ENCODE measurements at regions of chr2 and their contacts with region 1.

Region 1: DNA sequence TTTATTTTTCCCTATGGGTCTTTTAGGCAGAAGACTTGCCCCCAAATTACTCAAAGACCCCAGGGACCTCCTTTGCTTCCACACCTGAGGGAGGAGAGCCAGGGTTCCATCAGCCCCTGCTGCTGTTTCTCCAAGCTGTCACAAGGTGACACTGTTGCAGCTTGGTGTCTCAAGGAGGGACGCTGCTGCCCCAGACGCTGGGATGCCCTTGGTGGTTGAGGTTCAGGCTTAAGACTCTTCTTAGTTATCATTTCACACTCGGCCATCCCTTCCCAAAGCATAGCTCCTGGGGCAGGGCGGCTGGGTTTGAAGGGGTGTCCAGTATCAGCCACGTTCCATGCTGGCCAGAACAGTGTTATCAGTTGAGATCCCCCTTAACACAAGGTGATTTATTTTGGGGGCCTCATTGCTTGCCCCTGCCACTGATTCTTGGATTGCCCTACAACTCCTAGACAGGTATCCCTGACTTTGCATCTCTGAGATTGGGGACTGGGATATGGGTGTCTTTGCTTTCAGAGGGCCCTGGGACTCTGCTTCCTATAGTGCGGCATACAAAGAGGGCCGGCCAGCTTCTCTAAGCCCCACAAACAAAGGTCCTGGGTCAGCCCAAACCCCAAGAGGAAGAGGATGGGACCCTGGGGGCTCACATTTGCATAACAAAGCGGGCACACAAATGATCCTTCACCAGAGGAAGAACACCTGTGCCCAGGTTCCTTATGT is 22.7 kb downstream of the GPR55 start:
- DNase-seq: peak; percentile 81
- ATAC-seq: peak; percentile 43
- H3K4me3 Mint-ChIP-seq: no peak overlapping the region
- H3K27ac Mint-ChIP-seq: no peak overlapping the region
- H3K4me1 Mint-ChIP-seq: peaks cover 56% of the 10 kb centered on the region
- H3K27me3 Mint-ChIP-seq: peaks cover 12% of the 10 kb centered on the region

Region 2: DNA sequence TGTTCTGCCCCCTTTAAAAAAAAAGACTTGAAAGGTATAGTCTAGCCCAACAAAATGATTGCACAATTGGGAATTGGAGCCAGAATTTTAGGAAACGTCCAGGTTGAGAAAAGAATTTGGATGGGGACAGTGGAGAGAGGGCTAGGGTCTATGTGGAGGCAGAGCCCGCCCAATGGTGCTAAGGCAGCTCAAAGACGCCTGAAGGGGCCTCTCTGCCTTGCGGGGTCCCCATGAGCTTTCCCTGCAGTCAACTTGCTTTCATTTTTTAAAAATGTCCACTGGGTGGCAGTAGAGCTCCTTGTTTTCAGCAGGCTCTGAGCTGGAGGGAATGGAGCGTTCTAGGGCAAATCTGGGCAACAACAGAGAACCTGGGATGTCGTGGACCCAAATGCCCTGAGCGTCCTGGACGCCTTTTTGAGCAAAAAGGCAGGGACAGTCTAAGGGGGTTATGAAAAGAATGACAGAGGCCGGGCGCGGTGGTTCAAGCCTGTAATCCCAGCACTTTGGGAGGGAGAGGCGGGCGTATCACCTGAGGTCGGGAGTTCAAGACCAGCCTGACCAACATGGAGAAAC is 77.8 kb before region 1 on chr2:
- CTCF ChIA-PET with region 1: interaction called, 12 read pairs
- POLR2A ChIA-PET with region 1: no interaction called
- intact Hi-C with region 1: loop called (anchors 2 to 5 kb)
- DNase-seq: peak; percentile 62
- ATAC-seq: peak; percentile 87
- H3K4me3 Mint-ChIP-seq: peak overlapping the region; percentile 44
- H3K27ac Mint-ChIP-seq: no peak overlapping the region
- H3K4me1 Mint-ChIP-seq: peaks cover 5% of the 10 kb centered on the region
- H3K27me3 Mint-ChIP-seq: peaks cover 28% of the 10 kb centered on the region

Region 3: DNA sequence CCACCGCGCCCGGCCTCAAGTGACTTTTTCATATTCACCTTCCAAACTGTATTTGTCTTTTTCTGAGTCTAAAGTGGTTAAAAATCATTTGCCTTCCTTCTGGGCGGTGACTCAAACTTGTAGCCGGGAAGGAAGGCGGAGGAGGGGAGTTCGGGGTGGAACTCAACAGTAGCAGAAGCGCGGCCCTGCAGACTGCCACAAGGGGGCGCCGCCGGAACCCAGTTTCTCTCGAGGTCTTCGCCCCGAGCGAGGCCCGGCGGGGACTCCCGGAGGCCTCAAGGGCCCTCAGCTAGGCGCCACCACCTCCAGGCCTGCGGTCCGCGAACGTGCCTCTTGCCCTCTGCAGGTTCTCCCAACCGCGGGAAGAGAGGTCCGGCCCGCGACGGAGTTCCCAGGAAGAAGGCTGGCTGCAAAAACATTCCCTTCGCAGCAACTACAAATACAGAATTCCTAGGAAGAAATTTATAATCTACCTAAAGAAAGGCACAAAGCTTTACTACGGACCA is 54.4 kb before region 1 on chr2:
- CTCF ChIA-PET with region 1: interaction called, 3 read pairs
- POLR2A ChIA-PET with region 1: no interaction called
- intact Hi-C with region 1: loop called in 1 of 2 experiments (anchors 2 kb)
- DNase-seq: peak; percentile 98
- ATAC-seq: peak; percentile 97
- H3K4me3 Mint-ChIP-seq: no peak overlapping the region
- H3K27ac Mint-ChIP-seq: peak overlapping the region; percentile 47
- H3K4me1 Mint-ChIP-seq: peaks cover 18% of the 10 kb centered on the region
- H3K27me3 Mint-ChIP-seq: peaks cover 19% of the 10 kb centered on the region

Region 4: GRCh38 chr2:230864598-230865306 is 37.6 kb before region 1 on chr2 and contains the start of gene ITM2C:
- CTCF ChIA-PET with region 1: interaction called, 5 read pairs
- POLR2A ChIA-PET with region 1: no interaction called
- intact Hi-C with region 1: loop called (anchors 2 kb)
- DNase-seq: peak; percentile 89
- ATAC-seq: peak; percentile 86
- H3K4me3 Mint-ChIP-seq: peak within 1 kb of the TSS; percentile 84
- H3K27ac Mint-ChIP-seq: peak within 1 kb of the TSS; percentile 82
- H3K4me1 Mint-ChIP-seq: peaks cover 50% of the 10 kb centered on the region
- H3K27me3 Mint-ChIP-seq: peaks cover 5% of the 10 kb centered on the region
- total RNA-seq, gene ITM2C: 29.6 to 32.9 TPM

Region 5: GRCh38 chr2:230919681-230920080 is 17.3 kb after region 1 on chr2:
- CTCF ChIA-PET with region 1: interaction called, 10 read pairs
- POLR2A ChIA-PET with region 1: interaction called, 12 read pairs
- intact Hi-C with region 1: loop called (anchors 1 kb)
- DNase-seq: no peak
- ATAC-seq: peak; percentile 24
- H3K4me3 Mint-ChIP-seq: peak overlapping the region; percentile 50
- H3K27ac Mint-ChIP-seq: peak overlapping the region; percentile 77
- H3K4me1 Mint-ChIP-seq: peaks cover 78% of the 10 kb centered on the region
- H3K27me3 Mint-ChIP-seq: peaks cover 5% of the 10 kb centered on the region

Region 6: GRCh38 chr2:230924470-230925341 is 22.4 kb after region 1 on chr2 and contains the start of gene GPR55:
- CTCF ChIA-PET with region 1: interaction called, 10 read pairs
- POLR2A ChIA-PET with region 1: interaction called, 12 read pairs
- intact Hi-C with region 1: loop called (anchors 1 kb)
- DNase-seq: peak; percentile 90
- ATAC-seq: peak; percentile 69
- H3K4me3 Mint-ChIP-seq: peak within 1 kb of the TSS; percentile 76
- H3K27ac Mint-ChIP-seq: peak within 1 kb of the TSS; percentile 95
- H3K4me1 Mint-ChIP-seq: peaks cover 66% of the 10 kb centered on the region
- H3K27me3 Mint-ChIP-seq: peaks cover 4% of the 10 kb centered on the region
- total RNA-seq, gene GPR55: 3.6 to 4.0 TPM

Region 7: DNA sequence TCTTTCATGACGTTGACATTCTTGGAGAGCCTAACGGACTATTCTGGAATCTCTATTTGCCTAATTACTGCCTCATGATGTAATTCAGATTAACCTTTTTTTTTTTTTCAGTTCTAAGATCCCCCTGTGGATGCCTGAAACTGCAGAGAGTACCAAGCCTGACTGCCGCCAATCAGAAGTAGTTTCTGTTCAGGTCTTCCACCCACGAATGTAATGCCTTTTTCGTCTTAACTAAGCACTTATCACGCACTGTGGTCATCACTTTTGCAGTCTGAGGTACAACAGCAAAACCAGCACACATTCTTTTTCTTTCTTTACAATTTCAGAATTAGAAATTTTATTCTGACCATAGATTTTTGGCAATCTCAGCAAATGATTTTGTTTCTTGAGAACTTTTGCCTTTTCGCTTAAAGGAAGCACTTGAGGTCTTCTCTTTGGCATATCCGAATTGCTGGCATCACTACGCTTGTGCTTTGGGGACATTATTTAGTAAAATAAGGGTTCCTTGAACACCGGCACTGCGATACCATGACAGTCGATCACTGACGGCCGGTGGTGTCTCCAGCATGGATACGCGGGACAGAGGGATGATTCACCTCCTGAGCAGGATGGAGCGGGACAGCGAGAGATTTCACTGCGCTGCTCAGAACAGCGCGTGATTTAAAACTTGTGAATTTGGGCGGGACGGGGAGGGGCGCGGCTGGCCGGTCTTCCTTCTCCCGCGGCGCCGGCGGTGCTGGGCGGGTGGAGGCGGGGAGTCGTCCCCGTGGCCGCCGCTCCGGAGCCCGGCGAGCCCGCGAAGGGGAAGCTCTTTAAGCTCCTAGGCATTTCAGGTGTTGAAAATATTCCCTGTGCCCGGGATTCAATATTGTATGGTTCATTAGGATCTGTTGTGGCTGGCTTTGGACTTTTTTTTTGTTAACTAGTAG is 54.8 kb after region 1 on chr2:
- CTCF ChIA-PET with region 1: no interaction called
- POLR2A ChIA-PET with region 1: interaction called, 3 read pairs
- intact Hi-C with region 1: loop called in 1 of 2 experiments (anchors 1 kb)
- DNase-seq: peak; percentile 64
- ATAC-seq: peak; percentile 81
- H3K4me3 Mint-ChIP-seq: peak overlapping the region; percentile 79
- H3K27ac Mint-ChIP-seq: peak overlapping the region; percentile 95
- H3K4me1 Mint-ChIP-seq: peaks cover 49% of the 10 kb centered on the region
- H3K27me3 Mint-ChIP-seq: peaks cover 47% of the 10 kb centered on the region

Measured in activated CD4-positive, alpha-beta T cell treated with anti-CD3 and anti-CD28 coated beads for 36 hours (primary cell).